A549 (cell line): ENCODE measurements at regions of chr9 and their contacts with region 1.

Region 1: DNA sequence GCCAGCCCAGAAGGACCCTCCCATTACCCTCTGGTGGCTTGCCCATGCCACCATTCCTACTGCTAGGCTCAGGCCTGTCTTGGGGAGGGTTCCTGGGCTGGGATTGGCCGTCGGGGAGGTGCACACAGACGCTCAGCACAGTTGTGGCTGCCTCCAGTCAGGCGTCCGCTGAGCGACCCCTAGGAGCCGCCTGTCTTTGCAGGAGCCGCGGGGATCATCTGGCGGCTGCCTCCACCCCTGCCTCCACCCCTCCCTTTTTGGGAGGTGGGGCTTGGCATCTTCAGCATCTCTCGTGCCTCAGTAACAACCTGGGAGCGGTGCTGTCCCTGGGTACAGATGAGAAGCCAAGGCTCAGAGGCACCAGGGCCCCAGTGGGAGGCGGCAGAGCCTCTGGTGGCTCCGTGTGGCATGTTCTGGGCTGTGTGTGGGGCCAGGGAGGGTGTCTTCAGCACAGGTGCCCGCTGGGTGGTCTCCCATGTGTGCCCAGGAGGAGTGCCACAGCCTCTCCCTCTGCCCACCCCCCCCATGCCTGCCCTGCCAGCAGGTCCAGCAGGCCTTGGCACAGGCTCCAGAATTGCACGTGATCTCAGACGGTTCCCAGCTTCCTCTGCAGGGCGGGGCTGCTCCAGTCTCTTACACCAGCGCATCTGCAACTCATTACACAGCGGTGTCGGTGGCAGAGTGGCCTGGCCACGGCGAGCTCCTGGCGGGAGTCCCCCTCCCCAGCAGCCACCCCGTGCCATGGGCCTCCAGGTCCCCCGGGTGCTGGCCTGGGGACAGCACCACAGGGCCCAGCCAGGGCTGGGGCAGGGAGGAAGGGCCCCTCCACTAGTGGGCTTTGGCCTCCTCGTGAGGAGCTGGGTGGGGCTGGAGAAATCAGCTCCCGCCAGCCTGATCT is 39.8 kb downstream of the RXRA start:
- DNase-seq: peak; percentile 81 to 86
- ATAC-seq: peak; percentile 73 to 88
- H3K4me3 ChIP-seq: 0 out of 3 replicates have a peak overlapping the region, but pooled peaks have one; percentile 15
- H3K27ac ChIP-seq: peak overlapping the region; percentile 88 to 90
- H3K4me1 ChIP-seq: peaks cover 33% of the 10 kb centered on the region
- CTCF ChIP-seq: no peak
- EP300 ChIP-seq: no peak
- POLR2A ChIP-seq: 0 out of 2 replicates have a peak, but pooled peaks have one; percentile 8
- RAD21 ChIP-seq: peak in 1 of 2 experiments; percentile 35; a peak in 2 of 5 replicates

Region 2: GRCh38 chr9:134355561-134356295 is 10.3 kb before region 1 on chr9:
- CTCF ChIA-PET with region 1: interaction called, 10 read pairs
- POLR2A ChIA-PET with region 1: no interaction called
- DNase-seq: no peak
- ATAC-seq: no peak
- H3K4me3 ChIP-seq: no peak overlapping the region
- H3K27ac ChIP-seq: peak overlapping the region in 1 of 2 experiments; percentile 31; a peak in 1 of 6 replicates
- H3K4me1 ChIP-seq: peaks cover 17% of the 10 kb centered on the region
- CTCF ChIP-seq: no peak
- EP300 ChIP-seq: no peak
- POLR2A ChIP-seq: no peak
- RAD21 ChIP-seq: no peak

Region 3: GRCh38 chr9:134381671-134382516 is 15.9 kb after region 1 on chr9:
- CTCF ChIA-PET with region 1: interaction called, 24 read pairs
- POLR2A ChIA-PET with region 1: interaction called, 18 read pairs
- DNase-seq: no peak
- ATAC-seq: peak in 1 of 2 experiments; percentile 10; a peak in 1 of 6 replicates
- H3K4me3 ChIP-seq: no peak overlapping the region
- H3K27ac ChIP-seq: peak overlapping the region; percentile 93 to 97
- H3K4me1 ChIP-seq: peaks cover 95% of the 10 kb centered on the region
- CTCF ChIP-seq: peak; percentile 25
- EP300 ChIP-seq: no peak
- POLR2A ChIP-seq: no peak
- RAD21 ChIP-seq: no peak

Region 4: GRCh38 chr9:134407123-134407808 is 41.2 kb after region 1 on chr9:
- CTCF ChIA-PET with region 1: interaction called, 3 read pairs
- POLR2A ChIA-PET with region 1: interaction called, 12 read pairs
- DNase-seq: peak; percentile 96 to 98
- ATAC-seq: peak; percentile 76 to 87
- H3K4me3 ChIP-seq: peak overlapping the region; percentile 33
- H3K27ac ChIP-seq: peak overlapping the region; percentile 99 to 100
- H3K4me1 ChIP-seq: peaks cover 86% of the 10 kb centered on the region
- CTCF ChIP-seq: no peak
- EP300 ChIP-seq: peak in 1 of 2 experiments; percentile 60; a peak in 3 of 5 replicates
- POLR2A ChIP-seq: peak; percentile 70
- RAD21 ChIP-seq: peak in 1 of 2 experiments; percentile 14; a peak in 2 of 5 replicates

Region 5: GRCh38 chr9:134431095-134431494 is 65.1 kb after region 1 on chr9:
- CTCF ChIA-PET with region 1: no interaction called
- POLR2A ChIA-PET with region 1: no interaction called
- DNase-seq: no peak
- ATAC-seq: no peak
- H3K4me3 ChIP-seq: no peak overlapping the region
- H3K27ac ChIP-seq: no peak overlapping the region
- H3K4me1 ChIP-seq: peaks cover 45% of the 10 kb centered on the region
- CTCF ChIP-seq: no peak
- EP300 ChIP-seq: no peak
- POLR2A ChIP-seq: no peak
- RAD21 ChIP-seq: no peak

Region 6: DNA sequence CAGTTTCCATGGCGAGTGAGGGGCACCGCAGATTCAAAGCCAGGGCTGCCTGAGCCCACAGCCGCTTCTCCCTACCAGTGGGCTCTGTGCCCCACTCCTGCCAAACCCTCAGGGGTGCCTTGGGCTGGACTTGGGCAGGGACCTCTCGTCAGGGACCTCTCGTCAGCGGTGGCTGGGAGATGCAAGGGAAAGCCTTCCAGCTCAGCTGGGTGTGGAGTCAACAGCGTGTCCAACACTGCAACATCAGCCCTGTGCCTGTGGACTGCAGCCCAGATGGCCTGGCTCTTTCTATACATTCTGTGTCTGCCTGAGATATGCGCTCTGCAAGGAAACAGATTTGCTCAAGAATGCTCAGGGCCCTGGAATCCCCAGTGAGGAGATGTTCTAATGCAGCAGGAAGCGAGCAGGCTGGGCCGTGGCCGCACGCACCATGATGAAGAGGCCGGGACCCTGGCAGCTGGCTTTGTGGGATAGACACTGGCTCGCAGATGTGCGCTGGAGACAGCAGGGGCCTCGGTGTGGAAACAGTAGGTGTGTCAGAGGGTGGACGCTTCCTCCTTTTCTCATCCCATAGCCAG is 190.5 kb after region 1 on chr9:
- CTCF ChIA-PET with region 1: no interaction called
- POLR2A ChIA-PET with region 1: no interaction called
- DNase-seq: no peak
- ATAC-seq: no peak; a peak in 1 of 6 replicates
- H3K4me3 ChIP-seq: no peak overlapping the region
- H3K27ac ChIP-seq: no peak overlapping the region
- H3K4me1 ChIP-seq: peaks cover 17% of the 10 kb centered on the region
- CTCF ChIP-seq: no peak
- EP300 ChIP-seq: no peak
- POLR2A ChIP-seq: no peak
- RAD21 ChIP-seq: no peak

Region 7: DNA sequence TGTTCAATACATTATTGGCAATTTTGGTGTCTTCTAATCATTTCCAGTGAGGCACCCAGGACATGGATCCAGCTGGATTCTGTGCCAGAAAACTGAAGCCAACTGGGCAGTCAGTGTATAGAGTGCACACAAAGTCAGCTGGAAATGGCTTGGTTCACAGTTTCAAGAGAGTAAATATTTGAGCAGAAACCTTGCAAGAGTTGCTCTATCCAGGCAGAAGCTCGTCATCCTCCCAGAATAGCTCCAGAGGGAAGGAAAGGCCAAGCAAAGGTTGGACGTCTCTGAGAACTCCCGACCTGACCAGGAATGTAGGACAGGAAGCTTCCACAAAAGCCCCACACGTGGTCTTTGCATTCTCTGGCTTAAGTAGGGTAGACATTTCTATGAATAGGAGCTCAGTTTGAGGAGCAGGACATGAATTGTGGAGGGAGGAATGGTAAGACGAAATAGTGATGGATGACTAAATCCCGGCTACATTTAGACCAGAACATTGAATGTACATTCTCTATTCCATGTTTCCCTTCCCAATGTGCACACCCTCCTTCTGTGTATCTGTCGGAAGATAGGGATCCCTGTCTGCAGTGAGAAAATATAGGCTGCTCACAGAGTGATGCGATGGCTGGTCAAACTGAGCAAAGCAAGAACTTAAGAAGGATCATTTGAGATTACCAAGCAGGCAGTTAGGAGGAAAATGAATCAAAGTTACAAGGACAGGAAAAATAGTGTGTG is 441.8 kb after region 1 on chr9:
- CTCF ChIA-PET with region 1: no interaction called
- POLR2A ChIA-PET with region 1: no interaction called
- DNase-seq: peak in 1 of 2 experiments; percentile 27
- ATAC-seq: peak in 1 of 2 experiments; percentile 52; a peak in 2 of 6 replicates
- H3K4me3 ChIP-seq: no peak overlapping the region
- H3K27ac ChIP-seq: no peak overlapping the region
- H3K4me1 ChIP-seq: no peaks in the 10 kb centered on the region
- CTCF ChIP-seq: no peak
- EP300 ChIP-seq: no peak
- POLR2A ChIP-seq: no peak
- RAD21 ChIP-seq: no peak